ENCODE measurements at regions of chr18 and their contacts with region 1.

Region 1: GRCh38 chr18:56575819-56576663 is 62.4 kb downstream of the TXNL1 start:
- DNase-seq: peak in 1 of 10 donors; percentile 11
- H3K4me3 ChIP-seq: peak overlapping the region in 11 of 59 donors; percentile 1 to 41 (median 14)
- H3K27ac ChIP-seq: peak overlapping the region in 18 of 59 donors; percentile 3 to 57 (median 21)
- H3K27me3 ChIP-seq: no peaks in the 10 kb centered on the region
- CTCF ChIP-seq: peak; percentile 69 to 94 (median 83)

Region 2: GRCh38 chr18:54679318-54680149 is 1896.5 kb before region 1 on chr18:
- intact Hi-C with region 1: loop called in 1 of 2 experiments (anchors 10 kb)
- DNase-seq: no peak
- H3K4me3 ChIP-seq: no peak overlapping the region
- H3K27ac ChIP-seq: no peak overlapping the region
- H3K27me3 ChIP-seq: no peaks in the 10 kb centered on the region
- CTCF ChIP-seq: peak; percentile 12 to 84 (median 64)

Region 3: DNA sequence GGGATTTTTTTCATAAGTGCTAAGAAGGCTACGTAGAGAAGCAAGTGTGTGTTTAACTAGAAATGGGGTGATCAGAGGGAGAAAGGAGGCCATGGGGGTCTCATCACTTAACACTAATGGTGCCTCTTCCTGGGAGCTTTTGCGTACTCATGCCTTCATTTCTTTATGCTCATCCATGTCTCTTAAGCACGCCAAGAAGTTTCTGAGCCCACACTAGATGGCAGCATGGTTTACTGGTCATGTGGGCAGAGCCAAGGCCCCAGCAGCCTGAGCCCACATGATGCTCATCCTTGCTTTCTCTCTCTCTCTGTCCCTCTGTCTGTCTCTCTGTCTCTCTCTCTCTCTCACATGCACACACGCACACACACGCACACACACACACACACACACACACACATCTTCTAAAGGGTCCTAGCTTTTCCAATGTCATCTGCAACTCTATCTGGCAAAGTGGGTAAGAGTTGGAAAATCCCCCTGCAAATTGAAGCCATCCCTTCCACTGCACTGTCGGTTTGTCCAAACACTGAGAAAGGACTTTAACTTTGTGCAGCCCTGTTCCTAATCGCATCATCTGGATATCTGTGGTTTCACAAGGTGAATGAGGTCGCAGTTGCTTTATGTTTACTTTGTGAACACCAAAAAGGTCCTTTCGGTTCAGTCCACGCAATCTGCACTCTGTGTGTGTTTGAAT is 1479.6 kb before region 1 on chr18:
- intact Hi-C with region 1: loop called in 1 of 2 experiments (anchors 10 kb)
- DNase-seq: peak; percentile 35 to 72 (median 59)
- H3K4me3 ChIP-seq: no peak overlapping the region
- H3K27ac ChIP-seq: peak overlapping the region in 1 of 59 donors; percentile 28
- H3K27me3 ChIP-seq: no peaks in the 10 kb centered on the region
- CTCF ChIP-seq: peak in 53 of 56 donors; percentile 17 to 70 (median 55)

Region 4: DNA sequence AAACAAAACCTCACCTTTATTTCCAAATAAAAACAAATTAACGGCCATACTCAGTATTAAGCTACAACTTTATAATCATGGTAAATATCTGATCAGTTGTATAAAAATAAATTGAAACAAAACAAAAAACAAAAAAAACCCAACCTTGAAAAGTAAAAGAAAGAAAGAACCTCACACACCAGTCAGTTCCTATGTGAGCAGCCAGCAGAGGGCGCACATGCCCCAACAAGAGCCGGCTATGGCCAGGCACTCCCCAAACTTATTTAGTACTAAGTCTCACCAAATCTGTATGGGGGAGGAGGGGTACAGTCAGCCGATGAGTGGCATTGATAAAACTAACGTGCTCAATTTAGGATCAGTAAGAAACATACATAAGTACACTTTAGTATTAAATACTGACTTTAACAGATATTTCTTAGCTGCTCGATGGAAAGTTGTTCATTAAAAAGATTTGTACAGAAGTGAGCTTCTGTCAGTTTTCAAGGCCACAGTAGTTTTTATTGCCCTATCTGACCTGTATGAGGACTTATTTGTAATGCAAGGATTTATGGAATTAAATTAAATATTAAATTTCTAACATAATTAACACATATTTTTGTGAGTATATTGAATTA is 1160.7 kb before region 1 on chr18:
- intact Hi-C with region 1: loop called in 1 of 2 experiments (anchors 10 kb)
- DNase-seq: peak; percentile 85 to 95 (median 90)
- H3K4me3 ChIP-seq: peak overlapping the region in 2 of 59 donors; percentile 4 to 8
- H3K27ac ChIP-seq: peak overlapping the region in 53 of 59 donors; percentile 0 to 99 (median 81)
- H3K27me3 ChIP-seq: no peaks in the 10 kb centered on the region
- CTCF ChIP-seq: peak; percentile 86 to 99 (median 95)

Region 5: DNA sequence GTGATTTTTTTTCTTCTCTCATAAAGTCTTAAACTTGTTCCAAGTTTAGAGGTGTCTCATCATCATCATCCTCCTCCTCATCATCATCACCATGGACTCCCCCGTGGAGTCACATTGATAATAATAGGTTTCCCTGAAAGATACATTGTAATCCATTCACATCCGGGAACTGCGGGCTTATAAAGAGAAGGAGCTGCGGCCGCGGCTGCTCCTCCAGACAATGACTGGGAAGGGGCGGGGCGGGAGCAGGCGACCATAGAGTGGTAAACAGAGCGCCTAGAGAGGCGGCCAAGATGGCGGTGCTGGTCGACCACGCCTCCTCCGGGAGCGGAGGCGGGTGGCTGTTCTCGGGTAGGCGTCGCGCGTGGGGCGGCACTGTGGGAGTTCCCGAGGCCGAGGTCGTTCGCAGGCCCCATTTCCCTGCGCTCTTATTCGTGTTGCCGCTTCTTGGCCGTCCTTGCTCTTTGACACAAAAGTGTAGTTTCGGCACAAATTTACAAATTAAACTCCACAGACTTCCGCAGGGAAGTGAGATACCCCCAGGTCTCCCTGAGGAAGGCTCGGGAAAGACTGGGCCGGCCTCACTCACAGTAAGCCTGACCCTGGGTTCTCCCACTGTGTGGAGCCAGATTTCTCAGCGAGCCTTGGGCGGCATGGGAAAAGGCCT is 986.3 kb before region 1 on chr18:
- intact Hi-C with region 1: loop called in 1 of 2 experiments (anchors 10 kb)
- DNase-seq: peak; percentile 92 to 96 (median 94)
- H3K4me3 ChIP-seq: peak overlapping the region; percentile 50 to 86 (median 72)
- H3K27ac ChIP-seq: peak overlapping the region; percentile 71 to 99 (median 96)
- H3K27me3 ChIP-seq: no peaks in the 10 kb centered on the region
- CTCF ChIP-seq: peak in 50 of 56 donors; percentile 4 to 63 (median 46)

Region 6: DNA sequence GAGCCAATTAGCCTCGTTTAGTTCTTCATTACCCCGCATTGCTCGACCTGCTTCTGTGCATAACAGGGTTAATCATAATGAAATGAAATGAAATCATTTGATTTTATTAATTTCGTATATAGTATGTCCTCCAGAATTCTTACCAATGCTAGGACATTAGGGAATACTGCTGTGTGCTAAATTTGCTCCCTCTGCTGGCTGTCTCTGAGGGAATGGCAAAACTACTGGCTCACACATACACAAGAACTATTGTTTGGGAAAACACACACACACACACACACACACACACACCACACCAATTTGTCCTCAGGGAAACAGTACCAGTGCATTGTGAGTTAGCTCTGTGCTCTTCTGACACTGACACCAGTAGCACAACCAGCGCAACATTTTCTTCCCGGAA is 714.8 kb before region 1 on chr18:
- intact Hi-C with region 1: loop called in 1 of 2 experiments (anchors 10 kb)
- DNase-seq: peak in 5 of 10 donors; percentile 13 to 76 (median 58)
- H3K4me3 ChIP-seq: peak overlapping the region in 2 of 59 donors; percentile 11 to 14
- H3K27ac ChIP-seq: peak overlapping the region in 52 of 59 donors; percentile 3 to 85 (median 74)
- H3K27me3 ChIP-seq: no peaks in the 10 kb centered on the region
- CTCF ChIP-seq: peak; percentile 31 to 71 (median 57)

Region 7: DNA sequence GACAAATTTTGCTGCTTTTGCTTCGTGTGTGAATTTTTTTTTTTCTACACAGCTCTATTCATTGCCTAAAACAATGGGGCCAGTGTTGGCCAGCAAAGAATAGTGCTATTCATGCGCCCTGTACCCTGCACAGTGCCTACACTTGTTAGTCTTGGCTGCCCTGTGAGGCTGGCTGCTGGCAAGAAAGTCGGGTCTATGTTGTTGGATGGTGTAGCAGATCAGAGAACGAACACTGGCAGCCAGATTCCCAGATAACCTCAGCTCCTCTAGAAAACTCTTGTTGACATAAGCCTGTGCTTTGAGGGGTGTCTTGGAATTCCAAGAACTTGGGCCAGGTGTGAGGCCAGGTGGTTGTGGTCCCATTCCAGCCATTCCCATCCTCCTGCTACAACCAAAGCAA is 532.4 kb before region 1 on chr18:
- intact Hi-C with region 1: no loop called
- DNase-seq: peak; percentile 24 to 98 (median 90)
- H3K4me3 ChIP-seq: peak overlapping the region in 6 of 59 donors; percentile 2 to 33 (median 20)
- H3K27ac ChIP-seq: peak overlapping the region; percentile 66 to 98 (median 94)
- H3K27me3 ChIP-seq: no peaks in the 10 kb centered on the region
- CTCF ChIP-seq: peak in 4 of 56 donors; percentile 6 to 10 (median 6)

Region 8: GRCh38 chr18:56382541-56382940 is 193.5 kb before region 1 on chr18:
- intact Hi-C with region 1: loop called in 1 of 2 experiments (anchors 10 kb)
- DNase-seq: peak; percentile 5 to 73 (median 50)
- H3K4me3 ChIP-seq: peak overlapping the region in 22 of 59 donors; percentile 0 to 51 (median 21)
- H3K27ac ChIP-seq: peak overlapping the region in 30 of 59 donors; percentile 2 to 80 (median 36)
- H3K27me3 ChIP-seq: no peaks in the 10 kb centered on the region
- CTCF ChIP-seq: peak in 8 of 56 donors; percentile 13 to 34 (median 28)

Region 9: DNA sequence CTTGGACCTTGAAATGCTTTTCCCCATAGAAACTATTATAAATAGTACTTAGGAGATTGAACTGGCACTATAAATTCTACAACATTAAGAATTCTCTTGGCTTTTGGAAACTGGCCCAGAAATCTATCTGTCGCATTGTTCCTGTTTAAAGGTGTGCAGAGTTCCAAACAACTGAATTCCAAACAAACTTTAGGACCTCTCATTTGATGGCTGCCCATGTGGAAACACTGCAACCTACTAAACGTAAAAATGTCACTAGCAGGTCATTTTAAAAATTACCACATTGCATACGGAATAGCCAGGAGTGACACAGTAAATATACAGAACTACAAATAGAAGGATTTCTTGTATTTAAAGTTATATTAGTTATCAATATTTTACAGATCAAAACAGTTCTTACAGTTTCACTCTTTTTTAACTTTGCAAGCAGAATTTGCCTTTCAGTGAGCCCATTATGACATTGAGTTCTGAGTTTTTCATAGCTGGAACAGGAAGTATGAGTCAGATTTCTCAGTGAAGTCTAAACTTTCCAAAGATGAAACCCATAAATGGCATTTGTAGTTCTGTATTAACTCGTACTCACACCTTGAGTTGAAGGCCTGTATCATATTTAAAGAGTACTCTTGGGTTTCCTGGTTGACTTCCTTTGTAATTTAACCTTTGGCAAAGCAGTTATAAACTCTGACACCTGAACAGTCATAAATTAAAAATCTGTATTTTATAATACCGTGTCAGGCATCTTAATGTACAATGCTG is 428.5 kb after region 1 on chr18:
- intact Hi-C with region 1: no loop called
- DNase-seq: no peak
- H3K4me3 ChIP-seq: no peak overlapping the region
- H3K27ac ChIP-seq: no peak overlapping the region
- H3K27me3 ChIP-seq: no peaks in the 10 kb centered on the region
- CTCF ChIP-seq: no peak

Measured in dorsolateral prefrontal cortex (tissue), 120 donors.